PC-9 (cell line): ENCODE measurements at regions of chr5 and their contacts with region 1.

Region 1: DNA sequence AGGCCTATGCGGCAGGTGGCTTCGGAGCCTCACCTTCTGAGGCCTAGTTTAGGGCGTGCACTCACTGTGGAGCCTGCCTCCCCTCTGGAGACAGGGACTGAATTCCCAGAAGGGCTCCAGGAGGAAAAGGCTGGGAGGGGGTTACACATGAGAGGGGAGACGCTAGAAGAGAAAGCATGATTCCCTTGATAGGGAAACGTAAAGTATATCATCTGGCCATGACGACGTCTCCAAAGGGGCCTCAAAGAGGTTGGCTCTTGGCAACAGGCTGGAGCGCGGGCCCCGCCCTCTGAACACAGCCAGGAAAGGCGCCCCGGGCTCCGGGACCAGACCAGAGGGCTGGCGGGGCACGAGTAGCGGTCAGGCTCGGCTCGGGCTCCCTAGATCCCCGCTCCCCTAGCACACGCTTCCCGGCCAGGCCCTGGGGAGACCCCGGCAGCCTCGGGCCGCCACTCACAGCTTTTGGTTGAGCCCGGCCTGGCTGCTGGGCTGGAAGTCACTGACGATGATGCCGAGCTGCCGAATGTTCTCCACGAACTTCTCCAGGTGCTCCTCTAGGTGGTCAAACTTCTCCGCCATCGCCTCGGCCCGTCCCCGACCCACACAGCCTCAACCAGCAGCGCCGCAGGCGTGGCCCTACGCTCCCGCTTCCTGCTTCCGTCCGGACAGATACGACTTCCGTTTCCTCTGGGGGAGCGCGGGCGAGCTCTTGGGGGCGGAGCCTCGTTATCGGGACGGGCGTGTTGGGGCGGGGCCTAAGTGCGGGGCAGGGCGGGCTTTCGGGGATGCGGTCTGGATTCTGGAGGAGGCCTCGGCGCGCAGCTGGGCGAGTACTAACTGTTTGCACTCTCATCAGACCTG is at the start of gene MED10:
- DNase-seq: peak; percentile 87 to 98
- H3K4me3 ChIP-seq: peak within 1 kb of the TSS; percentile 93
- H3K27ac ChIP-seq: peak within 1 kb of the TSS; percentile 59
- H3K4me1 ChIP-seq: peaks cover 18% of the 10 kb centered on the region
- H3K27me3 ChIP-seq: no peaks in the 10 kb centered on the region
- CTCF ChIP-seq: no peak
- total RNA-seq, gene MED10: 81.8 and 82.0 TPM in 2 replicates

Region 2: DNA sequence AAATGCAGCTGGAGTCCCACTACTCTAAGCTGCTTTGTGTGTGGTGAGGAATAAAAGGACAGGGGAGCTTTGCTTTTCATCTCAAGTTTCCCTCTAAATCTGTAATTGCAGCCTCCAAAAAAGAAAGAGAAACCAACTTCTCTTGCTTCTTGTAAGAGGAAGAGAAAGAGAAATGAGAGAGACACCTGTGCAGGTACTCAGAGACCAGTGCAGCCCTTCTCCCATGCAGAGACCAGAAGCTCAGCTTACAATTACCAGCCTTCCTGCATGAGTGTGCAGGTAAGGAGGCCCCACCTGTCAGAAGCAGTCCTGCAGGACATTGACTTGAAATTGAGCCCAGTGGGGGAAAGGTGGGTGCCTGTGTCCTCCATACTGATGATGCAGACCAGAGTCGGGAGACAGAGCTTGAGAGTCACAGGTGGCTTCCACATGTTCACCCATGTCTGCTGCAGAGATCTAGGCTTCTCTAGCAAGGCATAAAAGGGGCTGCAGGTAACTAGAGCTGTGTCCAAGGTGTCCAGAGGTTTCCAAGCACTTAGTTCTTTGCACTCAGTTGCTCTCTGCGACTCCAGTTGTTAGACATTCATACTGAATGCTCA is 15.6 kb after region 1 on chr5:
- CTCF ChIA-PET with region 1: interaction called, 10 read pairs
- POLR2A ChIA-PET with region 1: no interaction called
- intact Hi-C with region 1: no loop called
- DNase-seq: no peak
- H3K4me3 ChIP-seq: no peak overlapping the region
- H3K27ac ChIP-seq: no peak overlapping the region
- H3K4me1 ChIP-seq: no peaks in the 10 kb centered on the region
- H3K27me3 ChIP-seq: peaks cover 93% of the 10 kb centered on the region
- CTCF ChIP-seq: no peak

Region 3: DNA sequence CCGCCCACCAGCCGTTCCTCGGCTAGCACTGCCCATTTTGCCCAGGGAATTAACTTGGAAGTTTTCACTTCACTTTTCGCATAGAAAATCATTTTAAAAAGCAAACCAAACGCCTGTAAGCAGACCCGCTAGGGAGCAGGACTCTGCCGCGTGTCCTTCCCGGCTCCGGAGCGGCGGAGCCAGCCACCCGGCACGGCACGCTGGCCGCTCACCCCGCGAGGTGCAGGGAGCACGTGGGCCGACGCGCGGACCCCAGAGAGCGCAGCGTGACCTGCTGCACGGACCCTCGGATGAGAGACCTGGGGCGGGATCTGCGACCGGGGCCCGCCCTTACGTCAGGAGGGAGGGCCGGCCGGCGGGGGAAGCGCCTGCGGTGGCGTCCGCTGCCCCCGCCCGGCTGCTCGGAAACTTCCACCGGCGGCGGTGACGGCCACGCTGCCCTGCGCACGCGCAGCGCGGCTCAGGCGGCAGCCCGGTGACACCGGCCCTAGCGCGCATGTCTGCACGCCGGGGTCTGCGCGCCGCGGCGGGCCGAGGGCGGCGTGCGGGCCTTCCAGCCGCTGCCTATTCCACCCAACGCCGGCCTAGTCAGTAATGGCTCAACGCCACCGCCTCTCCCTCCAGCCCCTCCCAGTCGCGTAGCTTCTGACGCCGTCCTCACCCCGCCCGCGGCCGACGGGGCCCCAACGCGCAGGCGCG is 334.6 kb after region 1 on chr5:
- CTCF ChIA-PET with region 1: no interaction called
- POLR2A ChIA-PET with region 1: no interaction called
- intact Hi-C with region 1: loop called (anchors 2 kb)
- DNase-seq: peak; percentile 92 to 100
- H3K4me3 ChIP-seq: peak overlapping the region; percentile 72
- H3K27ac ChIP-seq: peak overlapping the region; percentile 88
- H3K4me1 ChIP-seq: peaks cover 32% of the 10 kb centered on the region
- H3K27me3 ChIP-seq: no peaks in the 10 kb centered on the region
- CTCF ChIP-seq: 0 out of 2 replicates have a peak, but pooled peaks have one; percentile 15

Region 4: DNA sequence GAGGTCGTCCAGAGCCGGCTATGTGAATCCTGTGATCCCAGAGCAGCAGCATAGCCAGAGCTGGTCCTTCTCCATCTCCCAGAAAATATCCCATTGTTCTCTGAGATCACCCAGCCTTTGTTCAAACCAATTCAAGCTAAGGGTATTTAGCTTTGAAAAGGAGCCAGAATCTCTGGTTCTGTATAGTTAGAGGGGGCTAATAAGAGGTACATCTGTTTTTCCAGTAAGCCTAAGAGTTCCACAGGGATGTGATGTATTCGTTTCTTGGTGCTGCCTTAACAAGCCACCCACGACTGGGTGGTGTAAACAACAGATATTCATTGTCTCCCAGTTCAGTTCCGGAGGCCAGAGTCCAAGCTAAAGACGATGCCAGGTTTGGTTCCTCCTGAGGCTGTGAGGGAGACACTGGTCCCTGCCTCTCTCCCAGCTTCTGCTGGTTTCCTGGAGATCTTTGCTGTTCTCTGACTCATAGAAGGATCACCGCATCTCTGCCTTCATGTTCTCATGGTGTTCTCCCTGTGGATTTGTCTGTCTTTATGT is 1835.6 kb after region 1 on chr5:
- CTCF ChIA-PET with region 1: no interaction called
- POLR2A ChIA-PET with region 1: no interaction called
- intact Hi-C with region 1: no loop called
- DNase-seq: no peak
- H3K4me3 ChIP-seq: no peak overlapping the region
- H3K27ac ChIP-seq: no peak overlapping the region
- H3K4me1 ChIP-seq: no peaks in the 10 kb centered on the region
- H3K27me3 ChIP-seq: peaks cover 71% of the 10 kb centered on the region
- CTCF ChIP-seq: no peak